ENCODE measurements at regions of chr20 and their contacts with region 1.

Region 1: DNA sequence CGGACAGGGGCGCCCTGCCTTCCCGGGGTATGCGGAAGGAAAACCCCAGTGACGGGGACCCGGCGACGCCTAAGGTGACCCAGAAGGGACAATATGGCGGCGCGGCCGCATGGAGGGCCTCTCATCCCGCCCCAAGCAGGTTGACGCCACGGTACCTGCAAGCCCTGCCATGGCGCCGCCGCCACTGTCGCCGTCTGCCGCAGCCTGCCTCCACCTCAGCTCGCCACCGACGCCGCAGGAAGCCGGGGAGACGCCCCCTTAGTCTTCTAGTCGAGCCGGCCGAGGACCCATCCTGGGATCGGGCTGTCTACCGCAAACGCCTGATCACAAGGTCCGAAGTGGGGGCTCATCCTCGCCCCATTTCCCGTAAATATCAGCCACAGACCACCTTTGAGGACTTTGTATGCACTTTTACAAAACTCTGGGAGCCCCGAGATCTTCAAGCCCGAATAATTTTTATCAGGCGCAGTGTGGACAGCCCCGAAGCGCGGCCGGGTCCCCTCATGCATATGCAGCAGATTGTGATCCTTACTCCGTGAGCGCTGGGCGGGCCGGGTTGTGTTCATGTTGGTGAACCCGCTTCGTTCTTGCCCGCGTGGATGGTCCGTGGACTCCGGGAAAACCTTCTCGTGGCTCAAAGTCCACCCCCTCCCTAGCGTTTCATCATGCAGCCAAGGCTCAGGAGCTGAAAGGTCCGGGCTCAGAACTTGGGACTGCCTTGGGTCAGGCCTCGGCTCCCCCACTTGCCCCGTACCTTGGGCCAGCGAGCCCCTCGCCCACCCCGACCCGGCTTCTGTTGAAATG is at the start of gene BLCAP:
- DNase-seq: peak; percentile 87
- ATAC-seq: peak; percentile 87
- H3K4me3 Mint-ChIP-seq: peak within 1 kb of the TSS; percentile 93
- H3K27ac Mint-ChIP-seq: peak within 1 kb of the TSS; percentile 100
- H3K4me1 Mint-ChIP-seq: peaks cover 54% of the 10 kb centered on the region
- H3K27me3 Mint-ChIP-seq: no peaks in the 10 kb centered on the region
- CTCF ChIP-seq: no peak
- total RNA-seq, gene BLCAP: 70.3 and 78.0 TPM in 2 replicates

Region 2: GRCh38 chr20:37095599-37096414 is 432.0 kb before region 1 on chr20 and contains the start of gene RBL1:
- CTCF ChIA-PET with region 1: no interaction called
- POLR2A ChIA-PET with region 1: no interaction called
- intact Hi-C with region 1: loop called (anchors 1 kb)
- DNase-seq: peak; percentile 85
- ATAC-seq: peak; percentile 87
- H3K4me3 Mint-ChIP-seq: peak within 1 kb of the TSS; percentile 99
- H3K27ac Mint-ChIP-seq: peak within 1 kb of the TSS; percentile 100
- H3K4me1 Mint-ChIP-seq: peaks cover 33% of the 10 kb centered on the region
- H3K27me3 Mint-ChIP-seq: no peaks in the 10 kb centered on the region
- CTCF ChIP-seq: no peak
- total RNA-seq, gene RBL1: 18.6 and 20.4 TPM in 2 replicates

Region 3: GRCh38 chr20:37294262-37294981 is 233.4 kb before region 1 on chr20:
- CTCF ChIA-PET with region 1: no interaction called
- POLR2A ChIA-PET with region 1: interaction called, 8 read pairs
- intact Hi-C with region 1: loop called (anchors 1 kb)
- DNase-seq: no peak
- ATAC-seq: no peak
- H3K4me3 Mint-ChIP-seq: no peak overlapping the region
- H3K27ac Mint-ChIP-seq: peak overlapping the region; percentile 15
- H3K4me1 Mint-ChIP-seq: peaks cover 62% of the 10 kb centered on the region
- H3K27me3 Mint-ChIP-seq: no peaks in the 10 kb centered on the region
- CTCF ChIP-seq: no peak

Region 4: DNA sequence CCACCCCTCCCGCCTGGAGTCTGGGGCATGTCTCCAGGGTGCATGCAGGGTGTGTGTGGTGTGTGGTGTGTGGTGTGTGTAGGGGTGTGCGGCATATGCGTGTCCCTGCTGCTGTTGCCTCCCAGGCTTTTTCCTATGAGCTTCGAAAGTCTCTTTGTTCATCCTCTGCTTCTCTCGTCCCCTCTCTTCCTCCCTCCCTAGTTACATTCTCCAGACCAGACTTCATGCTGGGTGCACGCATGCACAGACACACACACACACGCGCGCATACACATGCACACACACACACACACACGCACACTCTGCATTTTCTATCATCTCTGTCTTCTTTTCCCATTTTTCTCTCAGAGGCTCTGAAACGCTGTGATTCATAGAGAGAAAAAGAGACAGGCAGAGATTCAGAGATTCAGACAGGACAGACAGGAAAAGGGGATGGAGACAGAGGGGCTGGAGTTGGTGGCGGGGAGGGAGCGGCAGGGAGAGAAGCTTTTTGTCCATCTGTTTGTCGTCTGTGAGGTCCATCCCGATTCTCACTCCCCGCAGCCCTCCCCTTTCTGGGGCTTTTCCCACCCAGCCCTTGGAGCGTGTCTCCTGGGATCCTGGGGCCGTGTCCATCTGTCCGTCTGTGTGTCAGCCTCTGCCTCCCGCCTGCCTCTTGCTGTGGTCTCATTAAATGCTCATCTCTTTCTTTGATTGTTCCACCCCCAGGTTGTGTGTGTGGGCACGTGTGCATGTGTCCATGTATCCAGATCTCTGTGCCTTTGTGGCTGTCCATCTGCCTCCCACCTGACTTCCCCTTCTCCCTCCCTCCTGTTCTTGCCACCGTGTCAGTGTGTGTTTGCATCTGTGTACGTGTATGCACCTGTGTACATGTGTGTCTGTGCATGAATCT is 119.3 kb before region 1 on chr20:
- CTCF ChIA-PET with region 1: no interaction called
- POLR2A ChIA-PET with region 1: no interaction called
- intact Hi-C with region 1: loop called (anchors 1 kb)
- DNase-seq: no peak
- ATAC-seq: no peak
- H3K4me3 Mint-ChIP-seq: no peak overlapping the region
- H3K27ac Mint-ChIP-seq: no peak overlapping the region
- H3K4me1 Mint-ChIP-seq: peaks cover 29% of the 10 kb centered on the region
- H3K27me3 Mint-ChIP-seq: peaks cover 11% of the 10 kb centered on the region
- CTCF ChIP-seq: no peak

Region 5: GRCh38 chr20:37543828-37544227 is 16.0 kb after region 1 on chr20:
- CTCF ChIA-PET with region 1: no interaction called
- POLR2A ChIA-PET with region 1: no interaction called
- intact Hi-C with region 1: no loop called
- DNase-seq: no peak
- ATAC-seq: no peak
- H3K4me3 Mint-ChIP-seq: no peak overlapping the region
- H3K27ac Mint-ChIP-seq: no peak overlapping the region
- H3K4me1 Mint-ChIP-seq: peaks cover 8% of the 10 kb centered on the region
- H3K27me3 Mint-ChIP-seq: peaks cover 18% of the 10 kb centered on the region
- CTCF ChIP-seq: no peak

Region 6: DNA sequence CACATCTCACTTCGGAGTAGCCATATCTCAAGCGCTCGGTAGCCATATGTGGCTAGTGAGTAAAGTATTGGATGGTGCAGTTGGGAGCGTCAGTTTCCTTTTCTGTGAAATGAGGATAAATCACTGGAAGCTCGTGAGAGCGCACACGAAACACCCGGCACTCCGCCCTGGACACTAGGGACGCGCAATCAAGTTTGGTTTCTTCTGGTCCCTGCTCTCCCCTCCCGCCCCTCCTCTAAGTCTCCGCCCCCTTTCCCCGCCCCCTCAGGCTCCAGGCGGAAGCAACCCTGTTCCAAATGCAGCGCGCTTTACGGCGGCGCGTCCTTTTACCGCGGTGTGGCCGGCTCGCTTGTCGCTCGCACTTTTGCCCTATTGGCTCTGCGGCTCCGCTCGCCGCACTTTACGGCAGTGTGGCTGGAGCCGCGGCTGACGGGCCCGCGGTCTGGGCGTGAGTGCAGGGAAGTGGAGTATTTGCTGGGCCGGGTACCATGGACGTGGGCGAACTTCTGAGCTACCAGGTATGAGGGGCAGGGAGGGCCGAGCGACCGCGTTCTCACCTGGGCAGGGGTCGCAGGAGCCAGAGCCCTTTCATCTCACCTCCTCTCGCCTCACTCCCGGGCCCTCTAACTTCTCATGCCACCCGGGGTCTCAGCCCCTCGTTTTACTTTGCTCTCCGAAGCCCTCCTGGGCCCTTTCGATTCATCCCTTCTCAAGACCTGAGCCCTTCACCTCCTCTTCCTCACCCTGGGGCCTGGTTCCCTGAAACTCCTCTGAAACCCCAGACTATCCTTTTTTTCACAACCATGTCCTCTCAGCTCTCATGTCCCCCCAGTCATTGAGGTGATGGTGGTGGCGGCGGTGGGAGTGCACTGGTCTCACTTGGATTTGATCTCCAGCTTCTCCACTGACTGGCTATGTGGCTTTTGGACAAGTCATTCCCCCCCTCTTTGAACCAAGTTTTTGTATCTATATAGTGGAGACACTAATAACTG is 166.1 kb after region 1 on chr20 and contains the start of gene CTNNBL1:
- CTCF ChIA-PET with region 1: no interaction called
- POLR2A ChIA-PET with region 1: no interaction called
- intact Hi-C with region 1: loop called (anchors 1 kb)
- DNase-seq: peak; percentile 90
- ATAC-seq: peak; percentile 92
- H3K4me3 Mint-ChIP-seq: peak within 1 kb of the TSS; percentile 99
- H3K27ac Mint-ChIP-seq: peak within 1 kb of the TSS; percentile 95
- H3K4me1 Mint-ChIP-seq: peaks cover 43% of the 10 kb centered on the region
- H3K27me3 Mint-ChIP-seq: peaks cover 15% of the 10 kb centered on the region
- CTCF ChIP-seq: no peak
- total RNA-seq, gene CTNNBL1: 102 and 110 TPM in 2 replicates